MCF 10A (cell line): ENCODE measurements at regions of chr12 and their contacts with region 1.

Region 1: DNA sequence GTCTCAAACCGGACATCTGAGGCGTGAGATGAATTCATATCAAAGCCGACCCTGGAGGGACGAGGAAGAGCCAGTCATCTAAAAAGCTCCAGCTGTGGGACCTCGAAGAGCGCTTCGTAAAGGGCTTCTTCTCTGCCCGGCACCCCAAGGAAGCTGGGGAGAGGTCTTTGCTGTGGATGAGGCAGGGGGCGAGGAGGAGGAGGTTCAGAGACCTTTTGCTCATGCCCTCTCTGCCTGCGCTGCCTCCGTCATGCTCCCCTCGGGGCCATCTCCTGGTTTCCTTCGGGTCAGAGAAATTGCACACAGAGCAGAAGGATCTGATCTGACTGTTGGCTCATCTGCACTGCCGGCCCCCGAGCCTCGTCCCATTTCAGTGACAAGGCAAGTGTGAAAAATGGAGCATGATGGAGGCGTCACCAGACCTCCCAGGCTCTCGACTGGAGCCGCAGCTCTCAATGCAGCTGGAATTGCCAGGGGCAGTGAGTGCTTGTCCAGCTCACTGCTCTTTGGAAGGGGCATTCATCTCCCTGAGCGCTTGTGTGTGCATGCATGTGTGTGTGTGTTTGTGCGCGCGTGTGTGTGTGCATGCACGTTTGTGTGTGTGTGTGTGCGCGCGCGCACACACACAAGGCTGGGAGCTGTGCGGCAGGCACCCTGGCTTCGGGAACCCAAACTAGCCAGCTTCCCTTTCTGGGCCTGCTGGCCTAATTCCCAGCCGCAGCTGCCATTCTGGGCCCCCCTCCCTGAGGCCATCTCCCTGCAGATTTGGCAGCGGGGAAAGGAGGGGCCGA is 9.2 kb downstream of the CABP1 start:
- DNase-seq: no peak
- H3K4me3 Mint-ChIP-seq: peak overlapping the region; percentile 15
- H3K27ac Mint-ChIP-seq: no peak overlapping the region
- H3K4me1 Mint-ChIP-seq: peaks cover 14% of the 10 kb centered on the region
- H3K27me3 Mint-ChIP-seq: peaks cover 49% of the 10 kb centered on the region
- CTCF ChIP-seq: no peak

Region 2: GRCh38 chr12:120327593-120327992 is 322.0 kb before region 1 on chr12 and contains the start of gene PLA2G1B:
- CTCF ChIA-PET with region 1: interaction called, 5 read pairs
- POLR2A ChIA-PET with region 1: no interaction called
- intact Hi-C with region 1: loop called (anchors 2 kb)
- DNase-seq: no peak
- H3K4me3 Mint-ChIP-seq: no peak within 1 kb of the TSS
- H3K27ac Mint-ChIP-seq: no peak within 1 kb of the TSS
- H3K4me1 Mint-ChIP-seq: peaks cover 11% of the 10 kb centered on the region
- H3K27me3 Mint-ChIP-seq: no peaks in the 10 kb centered on the region
- CTCF ChIP-seq: no peak
- total RNA-seq, gene PLA2G1B: not detected in 2 replicates

Region 3: GRCh38 chr12:120588948-120589930 is 60.4 kb before region 1 on chr12:
- CTCF ChIA-PET with region 1: interaction called, 127 read pairs
- POLR2A ChIA-PET with region 1: interaction called, 3 read pairs
- intact Hi-C with region 1: no loop called
- DNase-seq: no peak
- H3K4me3 Mint-ChIP-seq: no peak overlapping the region
- H3K27ac Mint-ChIP-seq: no peak overlapping the region
- H3K4me1 Mint-ChIP-seq: no peaks in the 10 kb centered on the region
- H3K27me3 Mint-ChIP-seq: no peaks in the 10 kb centered on the region
- CTCF ChIP-seq: no peak

Region 4: GRCh38 chr12:120625557-120626419 is 23.8 kb before region 1 on chr12:
- CTCF ChIA-PET with region 1: interaction called, 71 read pairs
- POLR2A ChIA-PET with region 1: interaction called, 4 read pairs
- intact Hi-C with region 1: no loop called
- DNase-seq: no peak
- H3K4me3 Mint-ChIP-seq: no peak overlapping the region
- H3K27ac Mint-ChIP-seq: no peak overlapping the region
- H3K4me1 Mint-ChIP-seq: no peaks in the 10 kb centered on the region
- H3K27me3 Mint-ChIP-seq: no peaks in the 10 kb centered on the region
- CTCF ChIP-seq: peak; percentile 20

Region 5: GRCh38 chr12:120686690-120687577 is 37.3 kb after region 1 on chr12 and contains the start of gene MLEC:
- CTCF ChIA-PET with region 1: interaction called, 14 read pairs
- POLR2A ChIA-PET with region 1: interaction called, 5 read pairs
- intact Hi-C with region 1: loop called (anchors 2 kb)
- DNase-seq: peak; percentile 98
- H3K4me3 Mint-ChIP-seq: peak within 1 kb of the TSS; percentile 87
- H3K27ac Mint-ChIP-seq: peak within 1 kb of the TSS; percentile 86
- H3K4me1 Mint-ChIP-seq: peaks cover 27% of the 10 kb centered on the region
- H3K27me3 Mint-ChIP-seq: no peaks in the 10 kb centered on the region
- CTCF ChIP-seq: no peak
- total RNA-seq, gene MLEC: 107 and 144 TPM in 2 replicates

Region 6: DNA sequence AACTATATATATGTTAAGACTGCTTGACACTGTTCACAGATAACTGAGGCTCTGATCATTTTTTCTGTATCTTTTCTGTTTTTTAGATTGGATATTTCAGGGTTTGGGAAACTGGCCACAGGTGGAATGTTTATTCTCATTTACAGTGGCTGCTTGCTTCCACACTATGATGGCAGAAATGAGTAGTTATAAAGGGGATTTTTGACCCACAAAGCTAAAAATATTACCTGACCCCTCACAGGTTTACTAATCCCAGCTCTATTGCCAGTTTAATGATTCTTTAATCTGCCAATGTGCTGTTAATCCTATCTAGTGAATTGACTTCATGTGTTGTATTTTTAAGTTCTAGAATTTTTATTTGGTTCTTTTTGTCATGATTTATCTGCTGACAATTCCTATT is 105.6 kb after region 1 on chr12:
- CTCF ChIA-PET with region 1: no interaction called
- POLR2A ChIA-PET with region 1: no interaction called
- intact Hi-C with region 1: no loop called
- DNase-seq: no peak
- H3K4me3 Mint-ChIP-seq: no peak overlapping the region
- H3K27ac Mint-ChIP-seq: no peak overlapping the region
- H3K4me1 Mint-ChIP-seq: no peaks in the 10 kb centered on the region
- H3K27me3 Mint-ChIP-seq: no peaks in the 10 kb centered on the region
- CTCF ChIP-seq: no peak

Region 7: GRCh38 chr12:120856980-120857379 is 207.3 kb after region 1 on chr12:
- CTCF ChIA-PET with region 1: no interaction called
- POLR2A ChIA-PET with region 1: no interaction called
- intact Hi-C with region 1: loop called (anchors 1 kb)
- DNase-seq: peak; percentile 50
- H3K4me3 Mint-ChIP-seq: no peak overlapping the region
- H3K27ac Mint-ChIP-seq: no peak overlapping the region
- H3K4me1 Mint-ChIP-seq: peaks cover 22% of the 10 kb centered on the region
- H3K27me3 Mint-ChIP-seq: no peaks in the 10 kb centered on the region
- CTCF ChIP-seq: peak; percentile 29